ENCODE measurements at regions of chr7 and their contacts with region 1.

Region 1: GRCh38 chr7:77940647-77941046 is 142.1 kb downstream of the PHTF2 start:
- DNase-seq: peak in 2 of 9 experiments; percentile 6 to 8
- ATAC-seq: no peak
- H3K4me3 ChIP-seq: no peak overlapping the region
- H3K4me3 Mint-ChIP-seq: no peak overlapping the region
- H3K27ac ChIP-seq: no peak overlapping the region
- H3K27ac Mint-ChIP-seq: no peak overlapping the region
- H3K4me1 ChIP-seq: no peaks in the 10 kb centered on the region
- H3K4me1 Mint-ChIP-seq: peaks cover 2% of the 10 kb centered on the region
- H3K27me3 ChIP-seq: no peaks in the 10 kb centered on the region
- H3K27me3 Mint-ChIP-seq: no peaks in the 10 kb centered on the region
- CTCF ChIP-seq: no peak

Region 2: GRCh38 chr7:77765906-77766800 is 174.5 kb before region 1 on chr7:
- CTCF ChIA-PET with region 1: no interaction called
- POLR2A ChIA-PET with region 1: no interaction called
- intact Hi-C with region 1: loop called in 1 of 2 experiments (anchors 10 kb)
- DNase-seq: no peak
- ATAC-seq: no peak
- H3K4me3 ChIP-seq: no peak overlapping the region
- H3K4me3 Mint-ChIP-seq: no peak overlapping the region
- H3K27ac ChIP-seq: no peak overlapping the region
- H3K27ac Mint-ChIP-seq: no peak overlapping the region
- H3K4me1 ChIP-seq: no peaks in the 10 kb centered on the region
- H3K4me1 Mint-ChIP-seq: peaks cover 33% of the 10 kb centered on the region
- H3K27me3 ChIP-seq: no peaks in the 10 kb centered on the region
- H3K27me3 Mint-ChIP-seq: no peaks in the 10 kb centered on the region
- CTCF ChIP-seq: no peak

Region 3: DNA sequence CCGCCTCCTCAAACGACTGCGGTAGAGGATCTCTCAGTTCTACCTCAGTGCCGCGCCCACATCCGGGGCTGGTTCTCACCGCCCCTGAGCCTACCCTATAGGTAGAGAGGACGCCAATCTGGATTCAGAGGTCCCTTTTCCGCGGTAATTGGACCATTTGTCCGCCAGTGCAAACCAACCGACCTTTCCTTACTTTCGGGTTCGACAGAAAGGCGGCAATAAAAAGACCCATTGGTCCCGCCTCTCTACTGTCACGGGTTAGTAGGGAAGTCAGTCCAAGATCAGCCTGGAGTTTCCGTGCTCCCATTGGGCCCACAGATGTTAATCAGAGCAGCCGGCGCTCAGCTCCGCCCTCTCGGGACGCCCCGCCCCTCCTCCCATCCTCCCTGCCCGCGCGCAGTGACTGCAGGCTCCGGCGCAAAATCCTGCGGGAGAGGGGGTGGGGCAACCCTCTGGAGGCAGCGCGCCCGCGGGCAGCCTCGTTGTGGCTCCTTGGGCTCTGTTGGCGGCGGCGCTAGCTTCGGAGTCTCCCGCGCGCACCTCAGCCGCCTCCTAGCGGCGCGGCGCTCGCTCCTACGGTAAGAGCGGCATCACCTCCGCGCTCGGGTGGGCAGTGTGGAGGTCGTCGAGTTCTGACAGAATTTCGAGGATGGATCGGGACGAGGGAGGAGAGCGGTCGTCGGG is 142.1 kb before region 1 on chr7 and contains the starts of genes PHTF2 and TMEM60:
- CTCF ChIA-PET with region 1: no interaction called
- POLR2A ChIA-PET with region 1: no interaction called
- intact Hi-C with region 1: loop called in 1 of 2 experiments (anchors 10 kb)
- DNase-seq: peak; percentile 85 to 98 (median 90)
- ATAC-seq: peak; percentile 88
- H3K4me3 ChIP-seq: peak within 1 kb of the TSS; percentile 70 to 81
- H3K4me3 Mint-ChIP-seq: peak within 1 kb of the TSS; percentile 97
- H3K27ac ChIP-seq: peak within 1 kb of the TSS; percentile 61 to 75
- H3K27ac Mint-ChIP-seq: peak within 1 kb of the TSS; percentile 96
- H3K4me1 ChIP-seq: peaks cover 39% of the 10 kb centered on the region
- H3K4me1 Mint-ChIP-seq: peaks cover 78% of the 10 kb centered on the region
- H3K27me3 ChIP-seq: no peaks in the 10 kb centered on the region
- H3K27me3 Mint-ChIP-seq: no peaks in the 10 kb centered on the region
- CTCF ChIP-seq: peak; percentile 67
- total RNA-seq, gene PHTF2: 10.2 to 14.1 TPM
- total RNA-seq, gene TMEM60: 2.2 TPM

Region 4: DNA sequence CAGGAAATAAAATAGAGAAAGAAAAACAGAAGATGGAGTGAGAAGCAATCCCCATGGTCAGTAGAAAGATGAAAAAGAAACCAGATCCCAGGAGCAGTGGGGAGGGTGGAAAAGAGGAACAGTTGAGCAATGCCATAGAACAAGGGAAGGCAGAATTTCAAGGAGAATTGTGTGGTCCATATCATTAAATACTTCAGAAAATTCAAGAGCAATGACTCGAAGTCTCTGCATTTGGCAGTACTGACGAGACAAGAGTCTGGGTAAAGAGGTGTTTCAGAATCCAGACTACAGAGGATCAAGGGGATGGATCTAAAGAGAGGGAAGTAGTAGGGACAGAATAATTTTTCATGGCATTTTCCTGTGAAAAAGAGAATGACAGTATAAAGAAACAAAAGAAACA is 370.5 kb after region 1 on chr7:
- CTCF ChIA-PET with region 1: no interaction called
- POLR2A ChIA-PET with region 1: no interaction called
- intact Hi-C with region 1: no loop called
- DNase-seq: no peak
- ATAC-seq: no peak
- H3K4me3 ChIP-seq: no peak overlapping the region
- H3K4me3 Mint-ChIP-seq: no peak overlapping the region
- H3K27ac ChIP-seq: no peak overlapping the region
- H3K27ac Mint-ChIP-seq: no peak overlapping the region
- H3K4me1 ChIP-seq: no peaks in the 10 kb centered on the region
- H3K4me1 Mint-ChIP-seq: no peaks in the 10 kb centered on the region
- H3K27me3 ChIP-seq: no peaks in the 10 kb centered on the region
- H3K27me3 Mint-ChIP-seq: no peaks in the 10 kb centered on the region
- CTCF ChIP-seq: no peak

Measured in CD8-positive, alpha-beta T cell (primary cell).